Ovary (tissue), 10 donors: ENCODE measurements at regions of chr1 and their contacts with region 1.

Region 1: GRCh38 chr1:202501281-202501680 is 152.8 kb downstream of the PPP1R12B start:
- DNase-seq: no peak
- H3K4me3 ChIP-seq: no peak overlapping the region
- H3K27ac ChIP-seq: no peak overlapping the region
- H3K4me1 ChIP-seq: no peaks in the 10 kb centered on the region
- H3K27me3 ChIP-seq: no peaks in the 10 kb centered on the region
- CTCF ChIP-seq: peak; percentile 28 to 73 (median 64)
- EP300 ChIP-seq: no peak
- POLR2A ChIP-seq: no peak

Region 2: DNA sequence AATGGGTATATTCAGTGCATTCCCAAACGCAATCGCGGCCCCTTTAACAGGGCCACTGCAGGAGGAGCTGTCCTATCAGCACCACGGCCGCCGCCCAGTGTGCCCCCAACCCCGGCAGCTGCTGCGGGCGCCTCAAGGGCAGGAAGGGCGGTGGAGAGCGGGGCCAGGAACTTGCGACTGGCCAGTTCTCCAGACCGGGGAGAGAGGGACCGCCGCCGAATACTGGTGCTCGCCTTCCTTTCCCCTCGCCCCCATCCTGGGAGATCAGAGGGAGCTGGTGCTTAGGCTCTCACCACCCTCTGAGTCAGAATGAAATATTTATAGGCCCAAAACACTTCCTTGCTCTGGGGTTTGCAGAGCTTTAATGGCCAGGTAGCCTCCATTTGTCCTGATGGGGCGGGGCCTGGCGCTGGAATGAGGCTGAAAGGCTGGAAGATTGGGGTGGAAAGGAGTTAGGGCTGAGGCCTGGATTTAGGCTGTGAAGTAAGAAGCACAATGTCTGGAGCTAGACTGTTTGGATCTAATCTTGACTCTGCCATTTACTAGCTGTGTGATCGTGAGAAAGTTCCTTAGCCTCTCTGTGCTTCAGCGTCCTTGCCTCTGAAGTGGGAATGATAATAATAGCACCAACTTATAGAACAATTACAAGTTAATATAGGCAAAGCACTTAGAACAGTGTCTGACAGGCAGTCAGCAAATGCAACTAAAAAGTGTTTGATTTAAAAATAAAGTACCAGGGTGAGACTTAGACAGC is 886.8 kb before region 1 on chr1:
- intact Hi-C with region 1: no loop called
- DNase-seq: peak in 3 of 5 donors; percentile 31 to 58 (median 41)
- H3K4me3 ChIP-seq: no peak overlapping the region
- H3K27ac ChIP-seq: no peak overlapping the region
- H3K4me1 ChIP-seq: no peaks in the 10 kb centered on the region
- H3K27me3 ChIP-seq: no peaks in the 10 kb centered on the region
- CTCF ChIP-seq: no peak
- EP300 ChIP-seq: no peak
- POLR2A ChIP-seq: no peak

Region 3: GRCh38 chr1:202565890-202566602 is 64.8 kb after region 1 on chr1:
- intact Hi-C with region 1: loop called in 3 of 4 experiments (anchors 10 kb)
- DNase-seq: no peak
- H3K4me3 ChIP-seq: no peak overlapping the region
- H3K27ac ChIP-seq: peak overlapping the region; percentile 43 to 57
- H3K4me1 ChIP-seq: peaks cover 34% of the 10 kb centered on the region
- H3K27me3 ChIP-seq: no peaks in the 10 kb centered on the region
- CTCF ChIP-seq: no peak
- EP300 ChIP-seq: no peak
- POLR2A ChIP-seq: no peak

Region 4: GRCh38 chr1:202571347-202572339 is 70.4 kb after region 1 on chr1:
- intact Hi-C with region 1: loop called in 3 of 4 experiments (anchors 10 kb)
- DNase-seq: no peak
- H3K4me3 ChIP-seq: no peak overlapping the region
- H3K27ac ChIP-seq: no peak overlapping the region
- H3K4me1 ChIP-seq: peaks cover 22% of the 10 kb centered on the region
- H3K27me3 ChIP-seq: no peaks in the 10 kb centered on the region
- CTCF ChIP-seq: peak; percentile 51 to 65 (median 65)
- EP300 ChIP-seq: no peak
- POLR2A ChIP-seq: no peak

Region 5: DNA sequence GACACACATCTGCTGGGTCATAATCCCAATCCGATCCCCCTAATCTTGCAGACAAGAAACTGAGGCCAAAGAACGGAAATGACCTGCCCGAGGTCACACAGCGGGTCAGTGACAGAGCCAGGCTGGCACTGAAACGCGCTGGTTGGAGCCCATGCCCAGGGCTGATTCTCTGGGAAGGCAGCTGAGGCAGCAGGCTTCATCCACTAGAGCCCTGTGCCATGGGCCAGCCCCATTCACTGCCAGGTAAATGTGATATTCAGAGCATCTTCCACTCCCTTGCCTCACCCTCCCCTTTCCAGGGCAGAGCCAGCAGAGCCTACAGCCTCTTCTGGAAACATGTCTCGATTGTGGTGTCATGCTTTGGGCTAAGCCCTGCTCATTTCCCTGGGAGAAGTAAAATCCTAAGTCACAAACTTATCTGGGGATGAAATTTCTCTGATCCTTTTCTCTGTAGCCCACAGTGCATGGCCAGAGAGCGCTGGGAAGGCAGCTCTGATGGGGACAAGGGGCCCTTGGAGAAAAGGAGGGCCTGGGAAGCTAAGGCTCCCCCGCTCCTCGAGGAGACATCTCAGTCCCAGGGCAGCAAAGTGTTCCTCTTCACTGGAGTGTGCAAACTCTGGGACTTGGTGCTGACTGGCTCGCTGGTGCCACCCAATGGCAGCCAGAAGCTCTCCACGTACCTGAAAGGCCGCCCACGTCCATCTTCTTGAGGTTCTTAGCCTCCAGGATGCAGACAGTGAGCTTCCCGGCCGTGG is 98.6 kb after region 1 on chr1:
- intact Hi-C with region 1: loop called (anchors 10 kb)
- DNase-seq: peak; percentile 61 to 78 (median 73)
- H3K4me3 ChIP-seq: no peak overlapping the region
- H3K27ac ChIP-seq: no peak overlapping the region
- H3K4me1 ChIP-seq: peaks cover 1% of the 10 kb centered on the region
- H3K27me3 ChIP-seq: no peaks in the 10 kb centered on the region
- CTCF ChIP-seq: peak; percentile 36 to 63 (median 62)
- EP300 ChIP-seq: no peak
- POLR2A ChIP-seq: no peak

Region 6: GRCh38 chr1:202680586-202681352 is 179.5 kb after region 1 on chr1:
- intact Hi-C with region 1: no loop called
- DNase-seq: no peak
- H3K4me3 ChIP-seq: no peak overlapping the region
- H3K27ac ChIP-seq: no peak overlapping the region
- H3K4me1 ChIP-seq: no peaks in the 10 kb centered on the region
- H3K27me3 ChIP-seq: no peaks in the 10 kb centered on the region
- CTCF ChIP-seq: no peak
- EP300 ChIP-seq: no peak
- POLR2A ChIP-seq: no peak